ENCODE measurements at regions of chr3 and their contacts with region 1.

Region 1: GRCh38 chr3:96813134-96813819 is 1.1 kb upstream of the EPHA6 start:
- DNase-seq: peak; percentile 84
- H3K4me3 Mint-ChIP-seq: peak overlapping the region; percentile 76
- H3K27ac Mint-ChIP-seq: no peak overlapping the region
- H3K4me1 Mint-ChIP-seq: peaks cover 6% of the 10 kb centered on the region
- H3K27me3 Mint-ChIP-seq: peaks cover 31% of the 10 kb centered on the region
- CTCF ChIP-seq: peak; percentile 73

Region 2: GRCh38 chr3:94862703-94863102 is 1950.6 kb before region 1 on chr3:
- CTCF ChIA-PET with region 1: no interaction called
- POLR2A ChIA-PET with region 1: no interaction called
- intact Hi-C with region 1: loop called (anchors 10 kb)
- DNase-seq: peak; percentile 30
- H3K4me3 Mint-ChIP-seq: no peak overlapping the region
- H3K27ac Mint-ChIP-seq: no peak overlapping the region
- H3K4me1 Mint-ChIP-seq: no peaks in the 10 kb centered on the region
- H3K27me3 Mint-ChIP-seq: no peaks in the 10 kb centered on the region
- CTCF ChIP-seq: peak; percentile 46

Region 3: DNA sequence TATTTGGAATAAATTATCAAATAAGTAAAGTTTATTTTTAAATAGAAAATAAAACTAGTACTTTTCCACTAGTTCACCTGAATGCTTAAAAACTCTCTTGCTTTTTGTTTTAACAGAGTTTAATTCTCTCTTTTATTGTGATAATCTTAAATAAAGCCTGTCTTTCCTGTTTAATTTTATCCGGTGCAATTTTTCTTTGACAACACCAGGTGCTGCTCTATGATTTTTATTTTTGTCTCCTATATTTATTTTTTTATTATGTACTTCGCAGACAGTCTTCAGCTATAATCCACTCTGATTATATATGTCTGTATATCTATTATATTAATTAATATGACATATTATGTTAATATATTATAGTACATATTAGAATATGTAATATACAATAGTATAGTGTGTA is 1291.9 kb before region 1 on chr3:
- CTCF ChIA-PET with region 1: no interaction called
- POLR2A ChIA-PET with region 1: no interaction called
- intact Hi-C with region 1: loop called (anchors 5 kb)
- DNase-seq: no peak
- H3K4me3 Mint-ChIP-seq: no peak overlapping the region
- H3K27ac Mint-ChIP-seq: no peak overlapping the region
- H3K4me1 Mint-ChIP-seq: no peaks in the 10 kb centered on the region
- H3K27me3 Mint-ChIP-seq: peaks cover 51% of the 10 kb centered on the region
- CTCF ChIP-seq: no peak

Region 4: DNA sequence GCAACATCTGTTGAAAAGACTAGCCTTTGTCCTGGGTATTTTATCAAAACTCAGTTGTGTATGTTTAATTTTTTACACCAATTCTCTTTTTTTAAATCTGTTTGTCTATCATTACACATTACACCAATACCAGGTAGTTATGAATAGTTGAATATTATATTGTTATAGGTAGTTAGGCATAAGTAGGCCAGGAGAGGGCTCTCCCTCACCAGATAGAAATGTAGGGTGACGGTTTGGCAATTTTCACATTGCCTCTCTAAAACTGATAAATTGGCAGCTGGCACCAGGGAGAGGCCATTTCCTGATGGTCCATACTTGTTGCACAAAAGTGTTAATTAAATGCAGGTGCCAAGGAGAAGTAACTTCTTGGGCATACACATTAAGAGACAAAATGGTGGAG is 481.9 kb before region 1 on chr3:
- CTCF ChIA-PET with region 1: interaction called, 3 read pairs
- POLR2A ChIA-PET with region 1: no interaction called
- intact Hi-C with region 1: loop called (anchors 1 kb)
- DNase-seq: peak; percentile 45
- H3K4me3 Mint-ChIP-seq: no peak overlapping the region
- H3K27ac Mint-ChIP-seq: no peak overlapping the region
- H3K4me1 Mint-ChIP-seq: no peaks in the 10 kb centered on the region
- H3K27me3 Mint-ChIP-seq: no peaks in the 10 kb centered on the region
- CTCF ChIP-seq: peak; percentile 45

Measured in MCF 10A (cell line).